Activated T-helper 2 cell treated with anti-CD3 and anti-CD28 coated beads, Interferon-gamma antibody, Interleukin-2, Interleukin-4, amounts not matched to agents 10 μg/mL and 5 μg/mL and 100 μg/mL, durations not matched to agents 14 hours and 24 hours and 36 hours (primary cell): ENCODE measurements at regions of chr9 and their contacts with region 1.

Region 1: DNA sequence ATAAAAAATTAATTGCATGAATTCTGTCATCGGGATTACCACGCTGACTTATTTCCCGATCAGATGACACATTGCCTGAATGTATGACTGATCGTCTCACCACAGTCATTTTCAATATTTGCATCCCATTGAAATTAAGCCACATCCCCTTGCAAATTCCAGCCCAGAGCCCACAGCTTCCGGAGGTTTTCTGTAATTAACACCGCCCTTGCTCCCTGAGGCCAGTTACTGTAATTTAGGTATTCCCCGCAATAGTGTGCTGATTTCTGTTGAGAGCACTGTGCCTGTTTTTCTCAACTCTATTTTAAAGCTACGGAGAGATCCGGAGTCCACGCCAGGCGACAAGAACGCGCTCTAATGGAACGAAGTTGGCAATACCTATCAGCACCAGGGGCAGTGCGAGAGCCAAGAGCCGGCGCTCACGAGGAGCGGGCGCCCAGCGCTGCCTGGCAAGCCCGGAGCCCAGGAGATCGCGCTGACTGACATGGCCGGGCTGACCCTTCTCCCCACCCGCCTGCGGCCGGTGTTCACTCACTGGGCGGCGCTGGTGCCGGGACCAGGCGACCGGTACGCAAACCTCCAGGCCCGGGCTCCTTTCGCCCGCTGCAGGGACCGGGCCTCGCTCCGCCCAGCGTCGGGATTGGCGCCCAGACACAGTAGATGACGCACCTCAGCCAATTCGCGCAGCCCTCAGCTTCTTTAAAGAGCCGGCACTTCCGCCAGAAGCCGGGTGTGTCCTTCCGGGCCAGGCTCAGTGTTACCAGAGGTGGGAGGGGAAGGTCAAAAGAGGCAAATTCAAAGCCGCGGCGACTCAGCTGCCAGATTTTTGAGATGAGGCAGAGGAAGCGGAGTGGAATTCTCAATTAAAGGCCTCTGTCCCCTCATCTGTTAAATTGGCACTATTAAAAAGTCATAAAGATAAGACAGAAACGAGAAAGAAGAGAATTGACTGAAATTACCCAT is at the start of gene PLGRKT:
- DNase-seq: peak; percentile 89
- H3K4me3 Mint-ChIP-seq: peak within 1 kb of the TSS; percentile 91
- H3K27ac Mint-ChIP-seq: peak within 1 kb of the TSS; percentile 96
- H3K4me1 Mint-ChIP-seq: peaks cover 54% of the 10 kb centered on the region
- H3K27me3 Mint-ChIP-seq: no peaks in the 10 kb centered on the region
- total RNA-seq, gene PLGRKT: 39.3 and 42.3 TPM in 2 replicates

Region 2: DNA sequence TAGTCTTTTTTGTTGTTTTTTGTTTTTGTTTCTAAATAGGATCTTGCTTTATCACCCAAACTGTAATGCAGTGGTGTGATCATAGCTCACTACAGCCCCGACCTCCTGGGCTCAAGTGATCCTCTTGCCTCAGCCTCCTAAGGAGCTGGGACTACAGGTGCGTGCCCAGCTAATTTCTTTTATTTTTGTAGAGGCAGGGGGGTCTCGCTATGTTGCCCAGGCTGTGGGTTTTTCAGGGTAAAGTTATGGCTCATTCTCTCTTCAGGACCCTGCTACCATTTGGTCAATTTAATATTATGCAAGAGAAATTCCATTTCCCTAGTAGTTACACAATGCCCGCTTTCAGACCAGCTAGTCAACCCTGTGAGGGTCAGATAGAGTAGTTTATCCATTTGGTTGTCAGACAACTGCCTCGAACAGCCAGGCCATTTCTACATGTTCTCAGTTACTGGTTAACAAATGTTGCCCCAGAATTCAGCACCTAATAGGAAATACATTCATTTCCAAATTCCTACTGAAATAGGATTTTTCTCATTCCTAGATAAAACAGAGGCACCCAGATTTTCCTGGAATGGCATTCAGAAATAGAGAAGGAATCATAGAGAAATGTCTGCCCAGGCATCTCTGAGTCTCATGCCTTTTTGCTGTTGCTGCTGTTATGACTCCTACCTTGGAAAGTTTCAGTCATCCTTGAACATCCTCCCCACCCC is 1131.3 kb before region 1 on chr9:
- intact Hi-C with region 1: loop called (anchors 5 kb)
- DNase-seq: no peak
- H3K4me3 Mint-ChIP-seq: no peak overlapping the region
- H3K27ac Mint-ChIP-seq: peak overlapping the region; percentile 71
- H3K4me1 Mint-ChIP-seq: peaks cover 53% of the 10 kb centered on the region
- H3K27me3 Mint-ChIP-seq: peaks cover 13% of the 10 kb centered on the region

Region 3: DNA sequence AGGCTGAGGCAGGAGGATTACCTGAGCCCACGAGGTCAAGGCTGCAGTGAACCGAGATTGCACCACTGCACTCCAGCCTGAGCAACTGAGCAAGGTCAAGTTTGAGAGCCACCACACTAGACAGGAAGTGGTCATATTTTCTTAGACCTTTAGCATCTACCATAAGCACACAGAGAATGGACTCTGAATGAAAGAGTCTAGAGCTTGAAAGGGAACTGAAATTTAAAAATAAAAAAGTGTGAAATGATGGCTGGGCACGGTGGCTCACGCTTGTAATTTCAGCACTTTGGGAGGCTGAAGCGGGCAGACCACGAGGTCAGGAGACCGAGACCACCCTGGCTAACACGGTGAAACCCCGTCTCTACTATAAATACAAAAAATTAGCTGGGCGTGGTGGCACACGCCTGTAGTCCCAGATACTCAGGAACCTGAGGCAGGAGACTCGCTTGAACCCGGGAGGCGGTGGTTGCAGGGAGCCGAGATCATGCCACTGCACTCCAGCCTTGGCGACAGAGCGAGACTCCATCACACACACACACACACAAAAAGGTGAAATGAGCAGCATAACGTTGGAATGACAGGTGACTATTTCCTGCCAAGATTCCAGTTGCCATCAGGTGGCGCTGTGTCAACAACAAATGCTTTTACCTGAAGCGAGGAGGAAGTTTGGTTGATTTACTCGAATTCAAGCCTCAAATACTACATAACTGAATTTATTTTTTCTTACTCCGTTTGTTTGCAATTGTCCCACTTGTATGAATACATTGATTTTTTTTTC is 675.2 kb before region 1 on chr9:
- intact Hi-C with region 1: loop called (anchors 5 kb)
- DNase-seq: peak; percentile 72
- H3K4me3 Mint-ChIP-seq: peak overlapping the region; percentile 63
- H3K27ac Mint-ChIP-seq: peak overlapping the region; percentile 78
- H3K4me1 Mint-ChIP-seq: peaks cover 12% of the 10 kb centered on the region
- H3K27me3 Mint-ChIP-seq: peaks cover 9% of the 10 kb centered on the region

Region 4: GRCh38 chr9:4866239-4866969 is 571.1 kb before region 1 on chr9:
- intact Hi-C with region 1: loop called (anchors 5 kb)
- DNase-seq: peak; percentile 44
- H3K4me3 Mint-ChIP-seq: peak overlapping the region; percentile 72
- H3K27ac Mint-ChIP-seq: peak overlapping the region; percentile 95
- H3K4me1 Mint-ChIP-seq: peaks cover 59% of the 10 kb centered on the region
- H3K27me3 Mint-ChIP-seq: no peaks in the 10 kb centered on the region

Region 5: DNA sequence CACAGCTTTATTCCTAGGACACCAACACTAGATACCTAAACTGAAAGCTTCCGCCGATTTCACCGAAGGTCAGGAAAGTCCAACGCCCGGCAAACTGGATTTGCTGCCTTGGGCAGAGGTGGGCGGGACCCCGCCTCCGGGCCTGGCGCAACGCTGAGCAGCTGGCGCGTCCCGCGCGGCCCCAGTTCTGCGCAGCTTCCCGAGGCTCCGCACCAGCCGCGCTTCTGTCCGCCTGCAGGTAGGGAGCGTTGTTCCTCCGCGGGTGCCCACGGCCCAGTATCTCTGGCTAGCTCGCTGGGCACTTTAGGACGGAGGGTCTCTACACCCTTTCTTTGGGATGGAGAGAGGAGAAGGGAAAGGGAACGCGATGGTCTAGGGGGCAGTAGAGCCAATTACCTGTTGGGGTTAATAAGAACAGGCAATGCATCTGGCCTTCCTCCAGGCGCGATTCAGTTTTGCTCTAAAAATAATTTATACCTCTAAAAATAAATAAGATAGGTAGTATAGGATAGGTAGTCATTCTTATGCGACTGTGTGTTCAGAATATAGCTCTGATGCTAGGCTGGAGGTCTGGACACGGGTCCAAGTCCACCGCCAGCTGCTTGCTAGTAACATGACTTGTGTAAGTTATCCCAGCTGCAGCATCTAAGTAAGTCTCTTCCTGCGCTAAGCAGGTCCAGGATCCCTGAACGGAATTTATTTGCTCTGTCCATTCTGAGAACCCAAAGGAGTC is 13.0 kb after region 1 on chr9 and contains the start of gene CD274:
- intact Hi-C with region 1: loop called (anchors 1 kb)
- DNase-seq: peak; percentile 77
- H3K4me3 Mint-ChIP-seq: peak within 1 kb of the TSS; percentile 97
- H3K27ac Mint-ChIP-seq: peak within 1 kb of the TSS; percentile 92
- H3K4me1 Mint-ChIP-seq: peaks cover 71% of the 10 kb centered on the region
- H3K27me3 Mint-ChIP-seq: no peaks in the 10 kb centered on the region
- total RNA-seq, gene CD274: 36.7 and 40.5 TPM in 2 replicates

Region 6: GRCh38 chr9:5582835-5583195 is 145.3 kb after region 1 on chr9:
- intact Hi-C with region 1: loop called (anchors 1 kb)
- DNase-seq: peak; percentile 46
- H3K4me3 Mint-ChIP-seq: no peak overlapping the region
- H3K27ac Mint-ChIP-seq: peak overlapping the region; percentile 88
- H3K4me1 Mint-ChIP-seq: peaks cover 69% of the 10 kb centered on the region
- H3K27me3 Mint-ChIP-seq: no peaks in the 10 kb centered on the region